ENCODE measurements at regions of chr9 and their contacts with region 1.

Region 1: DNA sequence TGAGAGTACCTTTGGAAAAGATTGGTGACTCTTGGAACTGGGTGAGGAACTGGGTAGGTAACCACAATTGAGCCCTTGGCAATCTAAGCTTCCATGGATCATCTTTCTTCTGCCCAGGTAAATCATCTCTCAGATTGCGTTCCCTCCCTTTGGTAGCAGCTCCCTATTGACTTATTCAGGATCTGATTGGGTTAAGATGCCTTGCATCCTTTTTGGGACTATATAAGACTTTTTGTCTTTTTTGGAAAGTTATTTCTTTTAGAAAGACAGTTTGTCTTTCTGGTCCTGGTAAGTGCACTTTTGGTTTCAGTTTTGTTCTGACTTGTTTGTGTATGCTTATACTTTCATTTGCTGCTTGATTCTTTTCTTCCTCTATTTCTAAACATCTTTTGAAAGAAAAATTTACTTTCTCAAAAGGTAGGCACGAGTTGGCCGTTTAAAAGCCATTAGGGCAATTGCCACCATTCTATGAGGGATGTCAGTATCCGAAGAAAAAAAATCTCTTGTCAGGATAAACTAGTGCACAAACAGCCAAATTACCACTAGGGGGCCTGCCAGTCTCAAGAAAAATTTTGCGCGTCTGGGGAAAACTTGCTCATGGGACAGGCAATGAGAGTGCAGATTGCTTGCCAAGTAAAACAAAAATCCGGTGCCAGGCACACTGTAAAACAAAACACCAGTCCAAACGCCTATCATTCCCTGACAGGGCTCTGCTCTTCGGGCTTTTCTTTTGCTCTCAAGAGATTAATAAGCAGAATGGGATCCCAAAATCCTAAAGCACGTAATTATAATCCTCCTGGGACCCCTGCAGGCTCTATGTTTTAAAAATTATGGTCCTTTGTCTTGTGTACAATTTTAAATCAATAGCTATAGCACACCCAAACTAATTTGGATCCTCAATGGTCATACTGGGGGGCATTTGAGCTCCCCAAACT is 12.8 kb downstream of the OR1J1 start:
- DNase-seq: peak; percentile 79
- H3K4me3 ChIP-seq: no peak overlapping the region
- H3K27ac ChIP-seq: no peak overlapping the region
- H3K4me1 ChIP-seq: no peaks in the 10 kb centered on the region
- H3K27me3 ChIP-seq: no peaks in the 10 kb centered on the region
- CTCF ChIP-seq: peak; percentile 65 to 90 (median 83)
- POLR2A ChIP-seq: no peak

Region 2: DNA sequence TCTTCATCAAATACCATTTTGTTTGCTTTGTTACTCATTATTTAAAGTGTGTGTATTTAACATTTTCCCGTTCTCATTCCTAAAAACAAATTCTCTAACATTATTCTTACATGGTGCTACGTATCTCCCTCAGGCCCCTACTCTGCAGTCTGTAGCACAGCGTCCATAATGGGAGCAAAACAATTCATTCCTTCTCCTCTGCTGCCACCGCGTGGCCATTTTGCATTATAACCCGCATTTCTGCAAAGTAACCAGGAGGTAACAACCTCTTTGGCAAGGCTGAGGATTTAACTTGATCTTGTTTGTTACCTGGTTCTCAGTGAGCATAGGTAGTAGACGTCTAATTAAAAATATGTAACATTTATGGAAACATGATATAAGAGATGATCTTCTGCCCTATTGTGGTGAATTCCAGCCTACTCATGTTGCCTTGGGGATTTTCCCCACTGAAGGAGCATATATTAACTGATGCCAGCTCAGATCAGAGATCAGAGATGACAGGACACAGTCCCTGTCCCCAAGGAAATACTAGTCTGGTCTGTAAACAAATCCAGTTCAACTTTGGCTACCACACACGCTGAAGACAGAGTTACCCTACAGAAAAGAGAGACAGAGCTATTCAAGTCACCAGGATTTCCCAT is 345.5 kb after region 1 on chr9:
- intact Hi-C with region 1: loop called (anchors 5 kb)
- DNase-seq: peak; percentile 75
- H3K4me3 ChIP-seq: no peak overlapping the region
- H3K27ac ChIP-seq: no peak overlapping the region
- H3K4me1 ChIP-seq: no peaks in the 10 kb centered on the region
- H3K27me3 ChIP-seq: no peaks in the 10 kb centered on the region
- CTCF ChIP-seq: peak; percentile 79 to 80 (median 79)
- POLR2A ChIP-seq: no peak